OCI-LY7 (cell line): ENCODE measurements at regions of chr7 and their contacts with region 1.

Region 1: DNA sequence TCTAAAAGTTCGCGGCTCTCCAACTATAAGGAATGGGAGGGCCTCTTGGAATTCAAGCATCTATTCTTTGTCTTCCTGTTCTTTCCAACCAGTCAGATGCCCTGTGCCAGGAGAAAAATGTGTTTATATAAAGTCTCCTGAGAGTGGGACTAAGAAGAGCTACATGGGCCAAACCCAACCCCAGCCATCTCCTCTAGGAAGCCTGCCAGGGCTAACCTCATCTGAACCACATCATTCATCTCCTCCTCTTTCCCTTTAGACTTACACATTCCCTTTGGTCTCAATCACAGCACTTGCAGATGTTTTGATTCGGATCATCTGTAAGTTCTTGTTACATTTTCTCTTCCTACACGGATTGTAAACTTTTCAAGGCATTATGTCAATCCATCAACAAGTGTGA is 62.6 kb downstream of the DOCK4 start:
- DNase-seq: no peak
- H3K4me3 ChIP-seq: no peak overlapping the region
- H3K27ac ChIP-seq: no peak overlapping the region
- H3K4me1 ChIP-seq: no peaks in the 10 kb centered on the region
- CTCF ChIP-seq: no peak

Region 2: GRCh38 chr7:112336261-112336660 is 192.7 kb after region 1 on chr7:
- CTCF ChIA-PET with region 1: no interaction called
- POLR2A ChIA-PET with region 1: interaction called, 10 read pairs
- intact Hi-C with region 1: no loop called
- DNase-seq: no peak
- H3K4me3 ChIP-seq: no peak overlapping the region
- H3K27ac ChIP-seq: no peak overlapping the region
- H3K4me1 ChIP-seq: no peaks in the 10 kb centered on the region
- CTCF ChIP-seq: no peak